ENCODE measurements at regions of chr12 and their contacts with region 1.

Region 1: GRCh38 chr12:67355578-67356379 is 86.6 kb downstream of the CAND1 start:
- DNase-seq: no peak
- H3K4me3 ChIP-seq: no peak overlapping the region
- H3K27ac ChIP-seq: peak overlapping the region in 2 of 4 donors; percentile 37 to 58
- H3K4me1 ChIP-seq: peaks cover 14 to 30% (median 23%) of the 10 kb centered on the region in 4 donors
- H3K27me3 ChIP-seq: no peaks in the 10 kb centered on the region
- CTCF ChIP-seq: peak; percentile 42 to 54 (median 47)
- EP300 ChIP-seq: no peak
- POLR2A ChIP-seq: no peak

Region 2: DNA sequence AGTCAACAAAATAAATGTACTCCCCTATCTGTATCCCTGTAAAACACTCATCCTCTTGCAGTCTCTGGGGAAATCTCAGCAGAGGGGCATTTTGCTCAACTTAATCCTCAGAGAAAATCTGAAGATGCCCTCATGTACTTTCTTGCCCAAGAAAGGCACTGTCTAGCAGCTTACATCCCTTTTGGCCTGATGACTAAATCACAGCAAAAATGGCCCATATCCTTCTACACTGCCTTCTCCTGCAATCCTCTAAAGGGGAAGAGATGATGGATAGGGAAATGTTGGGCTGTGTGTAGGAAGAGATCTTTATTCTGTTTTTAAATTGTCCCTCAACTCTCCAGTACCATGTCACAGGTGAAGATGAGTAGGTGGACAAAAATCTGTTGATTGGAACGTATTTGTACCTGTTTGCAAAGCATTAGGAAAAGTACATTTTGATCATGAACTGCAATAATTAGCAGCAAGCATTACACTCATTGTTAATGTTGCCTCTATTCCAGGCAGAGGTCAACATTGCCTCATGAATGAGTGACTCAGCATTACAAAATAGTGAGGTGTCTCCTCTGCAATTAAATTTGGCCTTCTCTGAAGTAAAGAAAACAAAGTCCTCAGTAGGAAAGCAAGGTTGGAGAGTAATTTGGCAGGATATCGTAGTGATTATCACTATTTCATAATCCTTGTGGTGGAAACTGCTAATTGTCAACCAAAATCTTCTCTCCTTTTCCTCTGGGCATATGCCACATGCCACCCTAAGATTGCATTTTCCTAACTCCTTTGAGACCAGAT is 259.1 kb before region 1 on chr12:
- intact Hi-C with region 1: no loop called
- DNase-seq: no peak
- H3K4me3 ChIP-seq: no peak overlapping the region
- H3K27ac ChIP-seq: peak overlapping the region in 3 of 4 donors; percentile 27 to 49 (median 46)
- H3K4me1 ChIP-seq: peaks cover 0 to 14% (median 8%) of the 10 kb centered on the region in 4 donors
- H3K27me3 ChIP-seq: no peaks in the 10 kb centered on the region
- CTCF ChIP-seq: no peak
- EP300 ChIP-seq: no peak
- POLR2A ChIP-seq: no peak

Region 3: DNA sequence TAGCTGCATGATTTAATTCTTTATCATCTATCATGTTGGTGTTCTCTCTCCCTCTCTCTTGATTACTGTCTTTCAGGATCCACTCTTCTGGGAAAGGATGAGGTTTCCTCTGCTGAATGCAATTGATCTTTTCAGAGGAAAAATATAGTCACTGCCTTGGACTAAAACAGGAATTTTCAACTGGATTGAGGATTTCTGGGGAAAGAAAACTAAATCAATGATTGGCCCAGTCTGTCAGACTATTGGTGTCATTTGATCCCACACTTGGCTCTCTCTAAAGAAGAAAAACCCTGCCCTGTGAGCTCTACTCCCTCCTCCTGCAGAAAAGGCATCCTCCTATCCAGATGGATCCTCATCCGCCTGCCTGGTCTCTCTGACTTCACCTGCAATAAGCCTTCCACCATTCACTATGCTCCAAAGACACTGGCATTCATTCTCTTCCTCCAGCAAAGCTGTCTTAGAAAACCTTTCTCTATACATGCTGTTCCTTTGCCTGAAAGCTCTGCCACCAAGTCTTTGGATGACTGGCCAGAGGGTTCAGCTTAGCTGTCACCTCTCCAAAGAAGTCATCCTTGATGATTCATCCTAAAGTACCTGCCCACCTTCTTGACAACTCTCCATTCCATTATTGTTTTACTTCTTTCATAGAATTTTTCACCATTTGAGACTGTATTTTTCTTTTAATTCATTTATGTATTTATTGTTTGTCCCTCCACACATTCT is 214.3 kb before region 1 on chr12:
- intact Hi-C with region 1: no loop called
- DNase-seq: no peak
- H3K4me3 ChIP-seq: no peak overlapping the region
- H3K27ac ChIP-seq: no peak overlapping the region
- H3K4me1 ChIP-seq: no peaks in the 10 kb centered on the region
- H3K27me3 ChIP-seq: no peaks in the 10 kb centered on the region
- CTCF ChIP-seq: no peak
- EP300 ChIP-seq: no peak
- POLR2A ChIP-seq: no peak

Region 4: DNA sequence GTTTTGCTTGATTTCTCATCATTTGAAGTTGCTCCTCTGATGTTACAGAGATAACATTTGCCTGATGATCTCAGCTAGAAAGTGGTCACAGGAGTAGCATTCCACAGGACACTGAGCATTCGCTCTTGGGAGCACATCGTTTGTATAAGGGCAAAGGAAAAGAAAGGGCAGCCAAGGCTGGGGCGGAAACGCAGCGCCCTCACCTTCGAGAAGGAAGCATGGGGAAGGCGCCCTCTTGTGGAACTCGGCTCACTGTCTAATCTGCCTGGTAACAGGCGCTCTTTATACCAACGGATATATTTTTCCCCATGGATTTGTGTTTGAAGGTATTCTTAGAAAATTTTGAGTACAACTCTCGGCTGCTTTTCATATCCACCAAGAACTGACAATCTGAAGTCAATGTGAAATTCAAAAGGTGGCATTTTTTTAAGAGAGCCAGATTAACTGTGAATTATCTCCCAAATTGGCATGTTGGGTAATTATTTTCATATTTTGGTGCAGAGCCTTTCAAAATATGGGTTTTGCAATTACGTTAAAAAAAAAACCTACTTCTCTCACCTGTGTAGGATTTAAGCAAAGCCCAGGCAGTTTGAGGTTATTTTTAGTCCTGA is 86.1 kb after region 1 on chr12:
- intact Hi-C with region 1: loop called (anchors 5 kb)
- DNase-seq: peak; percentile 94
- H3K4me3 ChIP-seq: peak overlapping the region in 2 of 4 donors; percentile 7 to 13
- H3K27ac ChIP-seq: peak overlapping the region in 2 of 4 donors; percentile 11 to 13
- H3K4me1 ChIP-seq: peaks cover 14 to 20% (median 17%) of the 10 kb centered on the region in 4 donors
- H3K27me3 ChIP-seq: no peaks in the 10 kb centered on the region
- CTCF ChIP-seq: peak; percentile 80 to 90 (median 83)
- EP300 ChIP-seq: no peak
- POLR2A ChIP-seq: no peak

Region 5: DNA sequence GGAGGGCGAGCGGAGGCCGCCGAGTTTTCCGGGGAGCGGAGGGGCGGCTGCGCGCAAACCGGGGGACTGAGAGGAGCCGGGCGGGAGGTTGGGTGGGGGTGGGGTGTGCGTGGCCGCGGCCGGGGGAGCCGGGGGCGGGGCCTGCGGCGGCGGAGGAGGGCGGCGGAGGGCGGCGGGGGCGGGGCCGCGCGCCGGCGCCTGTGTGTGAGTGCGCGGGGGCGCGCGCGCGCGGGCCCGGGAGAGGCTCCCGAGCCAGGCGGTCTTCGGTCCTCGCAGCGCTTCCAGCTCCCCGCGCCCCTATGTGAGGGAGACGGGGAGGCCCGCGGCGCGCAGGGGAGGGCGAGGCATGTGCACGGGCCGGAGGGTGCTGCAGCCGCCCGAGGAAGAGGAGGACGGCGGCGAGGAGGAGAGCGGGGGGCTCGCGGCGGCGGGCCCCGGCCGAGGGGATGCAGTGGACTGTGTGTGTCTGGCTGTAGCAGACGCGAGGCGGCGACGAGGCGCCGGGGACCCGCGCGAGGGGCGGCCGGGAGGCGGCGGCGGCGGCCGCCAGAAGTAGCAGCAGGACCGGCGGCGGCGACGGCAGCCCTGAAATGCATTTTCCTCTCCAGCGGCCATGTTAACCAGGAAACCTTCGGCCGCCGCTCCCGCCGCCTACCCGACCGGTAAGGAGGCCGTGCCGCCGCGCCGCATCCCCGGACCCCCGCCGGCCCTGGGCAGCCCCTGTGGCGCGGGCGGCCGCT is 292.9 kb after region 1 on chr12 and contains the start of gene DYRK2:
- intact Hi-C with region 1: loop called (anchors 5 kb)
- DNase-seq: no peak
- H3K4me3 ChIP-seq: peak within 1 kb of the TSS; percentile 85 to 100 (median 98)
- H3K27ac ChIP-seq: peak within 1 kb of the TSS; percentile 96 to 99 (median 98)
- H3K4me1 ChIP-seq: peaks cover 24 to 51% (median 48%) of the 10 kb centered on the region in 4 donors
- H3K27me3 ChIP-seq: no peaks in the 10 kb centered on the region
- CTCF ChIP-seq: no peak
- EP300 ChIP-seq: no peak
- POLR2A ChIP-seq: peak; percentile 77
- total RNA-seq, gene DYRK2: 22.2 to 57.9 (median 36.9) TPM

Region 6: DNA sequence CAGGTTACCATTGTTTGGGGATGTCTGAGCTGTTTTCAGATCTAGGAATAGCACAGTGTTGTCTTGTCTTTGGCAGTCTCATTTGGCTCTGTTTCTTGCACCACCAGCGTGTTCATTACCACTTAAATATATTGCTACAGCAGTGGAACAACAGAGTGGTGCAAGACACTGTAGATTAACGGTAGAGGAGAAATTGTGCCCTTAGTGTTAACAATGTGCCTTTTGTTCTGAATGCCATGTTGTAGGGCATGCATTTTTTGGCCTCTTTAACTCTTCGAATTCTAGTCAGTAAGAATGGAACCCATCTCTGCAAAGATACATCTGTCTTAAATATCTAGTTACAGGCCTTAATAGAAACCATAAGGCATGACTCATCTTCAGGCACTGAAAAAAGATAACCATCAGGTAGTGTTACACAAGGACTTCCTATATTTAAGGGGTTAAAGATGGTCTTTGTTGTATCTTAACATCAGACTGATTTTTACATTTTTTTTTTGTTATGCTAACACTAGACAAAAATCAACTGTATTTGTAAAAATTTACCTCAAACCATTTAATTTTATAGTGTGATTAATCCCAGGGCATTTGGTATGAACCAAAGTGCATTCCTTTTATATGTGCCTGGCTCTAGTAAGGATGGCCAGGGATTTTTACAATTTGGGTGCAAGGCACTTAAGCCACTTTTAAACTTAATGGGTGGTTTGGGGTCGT is 305.7 kb after region 1 on chr12:
- intact Hi-C with region 1: loop called (anchors 5 kb)
- DNase-seq: no peak
- H3K4me3 ChIP-seq: no peak overlapping the region
- H3K27ac ChIP-seq: peak overlapping the region in 3 of 4 donors; percentile 50 to 63 (median 60)
- H3K4me1 ChIP-seq: peaks cover 61 to 88% (median 83%) of the 10 kb centered on the region in 4 donors
- H3K27me3 ChIP-seq: no peaks in the 10 kb centered on the region
- CTCF ChIP-seq: no peak
- EP300 ChIP-seq: no peak
- POLR2A ChIP-seq: no peak

Region 7: GRCh38 chr12:67943226-67943892 is 587.6 kb after region 1 on chr12:
- intact Hi-C with region 1: loop called (anchors 2 kb)
- DNase-seq: no peak
- H3K4me3 ChIP-seq: no peak overlapping the region
- H3K27ac ChIP-seq: peak overlapping the region in 1 of 4 donors; percentile 33
- H3K4me1 ChIP-seq: peaks cover 14 to 36% (median 26%) of the 10 kb centered on the region in 4 donors
- H3K27me3 ChIP-seq: no peaks in the 10 kb centered on the region
- CTCF ChIP-seq: peak; percentile 73 to 82 (median 79)
- EP300 ChIP-seq: no peak
- POLR2A ChIP-seq: no peak

Region 8: DNA sequence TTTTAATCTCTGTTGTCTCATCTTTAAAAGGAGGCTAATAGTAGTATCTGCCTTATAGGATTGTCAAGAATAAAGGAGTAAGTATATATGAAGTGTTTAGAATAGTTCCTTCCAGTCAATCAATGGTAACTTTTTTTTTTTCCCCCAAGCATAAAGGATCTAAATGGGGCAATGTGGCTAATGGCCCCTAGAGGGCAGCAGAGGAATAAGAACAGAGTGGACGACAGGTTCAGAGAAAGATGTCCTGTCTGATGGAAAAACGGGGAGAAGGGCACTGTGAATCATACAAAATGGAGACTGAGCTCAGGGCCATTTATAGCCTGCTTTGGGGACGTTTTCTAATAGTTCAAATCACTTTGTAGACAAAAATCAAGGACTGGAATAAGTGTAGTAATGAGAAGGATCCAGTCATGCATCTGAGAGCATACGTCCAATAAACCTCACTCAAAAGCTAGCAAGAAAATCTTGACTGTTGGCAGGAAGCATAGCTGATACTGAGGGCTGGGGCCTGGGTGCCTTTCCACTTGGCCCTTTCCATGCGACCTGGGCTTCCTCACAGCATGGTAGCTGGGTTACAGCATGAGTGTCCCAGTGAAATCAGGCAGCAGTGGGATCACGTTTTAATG is 684.8 kb after region 1 on chr12:
- intact Hi-C with region 1: loop called (anchors 5 kb)
- DNase-seq: no peak
- H3K4me3 ChIP-seq: no peak overlapping the region
- H3K27ac ChIP-seq: no peak overlapping the region
- H3K4me1 ChIP-seq: no peaks in the 10 kb centered on the region
- H3K27me3 ChIP-seq: no peaks in the 10 kb centered on the region
- CTCF ChIP-seq: peak; percentile 76 to 86 (median 78)
- EP300 ChIP-seq: no peak
- POLR2A ChIP-seq: no peak